Sigmoid colon (tissue), 7 donors: ENCODE measurements at regions of chr9 and their contacts with region 1.

Region 1: DNA sequence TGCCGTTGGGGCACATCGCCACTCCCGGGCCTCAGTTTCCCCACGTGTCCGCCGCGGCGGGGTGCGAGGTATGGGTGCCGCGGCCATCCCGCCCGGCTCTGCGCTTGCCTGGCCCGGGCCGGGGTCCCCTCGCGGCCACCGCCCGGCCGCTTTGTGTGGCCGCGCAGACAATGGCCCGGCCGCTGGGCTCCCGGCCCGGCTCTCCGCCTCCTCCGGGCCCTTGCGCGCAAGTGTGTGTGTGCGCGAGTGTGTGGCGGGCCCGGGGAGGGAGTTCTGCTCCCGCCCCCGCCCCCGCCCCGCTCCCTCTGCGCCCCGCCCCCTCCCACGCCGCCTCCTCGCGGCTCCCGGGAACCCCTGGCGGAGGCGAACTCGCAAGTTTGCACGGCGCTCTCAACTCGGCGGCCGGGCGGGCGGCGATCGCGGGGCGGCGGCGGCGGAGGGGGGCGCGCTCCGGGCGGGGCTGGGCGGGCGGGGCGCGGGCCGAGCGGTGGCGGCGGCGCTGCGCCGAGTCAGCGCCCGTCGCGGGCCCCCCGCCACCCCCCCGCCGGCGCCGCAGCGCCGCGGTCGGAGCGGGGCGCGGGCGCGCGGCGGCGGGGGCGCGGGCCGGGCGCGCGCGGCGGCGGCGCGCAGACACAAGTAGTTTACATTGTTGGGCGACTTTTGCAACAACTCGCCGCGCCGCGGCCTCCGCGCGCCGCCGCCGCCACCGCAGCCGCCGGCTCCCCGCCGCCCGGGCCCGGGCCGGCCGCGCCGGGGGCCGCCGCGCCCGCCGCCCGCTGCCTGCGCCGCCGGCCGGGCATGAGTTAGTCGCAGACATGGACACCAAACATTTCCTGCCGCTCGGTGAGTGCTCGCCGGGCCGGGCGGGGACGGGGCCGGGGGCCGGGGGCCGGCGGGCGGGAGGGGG is at the start of gene RXRA:
- DNase-seq: peak; percentile 94
- H3K4me3 ChIP-seq: peak within 1 kb of the TSS; percentile 81 to 88 (median 84)
- H3K27ac ChIP-seq: peak within 1 kb of the TSS; percentile 96 to 100 (median 97)
- H3K4me1 ChIP-seq: peaks cover 0 to 63% (median 60%) of the 10 kb centered on the region in 4 donors
- H3K27me3 ChIP-seq: no peaks in the 10 kb centered on the region
- CTCF ChIP-seq: no peak
- EP300 ChIP-seq: no peak
- POLR2A ChIP-seq: no peak
- total RNA-seq, gene RXRA: 26.7 to 49.0 (median 31.4) TPM

Region 2: DNA sequence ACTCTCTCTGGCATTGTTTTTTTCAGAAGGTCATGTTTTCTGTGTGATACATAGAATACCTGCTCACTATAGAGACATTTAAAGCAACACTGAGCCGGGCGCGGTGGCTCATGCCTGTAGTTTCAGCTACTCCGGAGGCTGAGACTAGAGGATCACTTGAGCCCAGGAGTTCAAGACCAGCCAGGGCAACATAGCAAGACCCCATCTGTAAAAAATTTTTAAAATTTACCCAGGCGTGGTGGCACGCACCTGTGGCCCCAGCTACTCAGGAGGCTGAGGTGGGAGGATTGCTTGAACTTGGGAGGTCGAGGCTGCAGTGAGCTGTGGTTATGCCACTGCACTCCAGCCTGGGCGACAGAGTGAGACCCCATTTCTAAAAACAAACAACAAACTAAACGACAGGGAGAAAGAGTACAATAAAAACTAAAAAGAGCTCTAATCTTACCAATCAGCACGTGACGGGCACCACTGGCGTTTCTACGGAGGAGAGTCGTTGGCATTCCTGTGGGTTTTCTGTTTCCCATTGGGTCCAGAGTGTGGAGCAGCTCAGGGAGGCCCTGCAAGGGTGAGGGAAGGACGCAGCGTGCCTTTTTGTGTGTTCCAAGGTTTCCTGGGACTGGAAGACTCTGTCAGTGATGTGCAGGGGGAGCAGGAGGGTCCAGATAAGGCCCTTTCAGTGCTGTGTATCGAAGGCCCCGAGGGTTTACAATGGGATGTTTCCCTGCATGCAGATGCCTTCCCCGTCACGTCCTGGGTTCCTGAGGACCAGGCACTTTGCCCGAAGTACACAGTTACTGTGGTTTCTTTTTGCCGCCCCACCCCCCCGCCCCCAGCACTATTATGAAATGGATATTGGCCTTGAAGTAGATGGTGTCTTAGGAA is 154.5 kb before region 1 on chr9:
- intact Hi-C with region 1: loop called (anchors 1 kb)
- DNase-seq: peak; percentile 84
- H3K4me3 ChIP-seq: no peak overlapping the region
- H3K27ac ChIP-seq: peak overlapping the region in 3 of 4 donors; percentile 58 to 67 (median 63)
- H3K4me1 ChIP-seq: peaks cover 0 to 41% (median 30%) of the 10 kb centered on the region in 4 donors
- H3K27me3 ChIP-seq: peaks cover 13 to 32% (median 14%) of the 10 kb centered on the region in 3 donors
- CTCF ChIP-seq: no peak
- EP300 ChIP-seq: no peak
- POLR2A ChIP-seq: no peak

Region 3: DNA sequence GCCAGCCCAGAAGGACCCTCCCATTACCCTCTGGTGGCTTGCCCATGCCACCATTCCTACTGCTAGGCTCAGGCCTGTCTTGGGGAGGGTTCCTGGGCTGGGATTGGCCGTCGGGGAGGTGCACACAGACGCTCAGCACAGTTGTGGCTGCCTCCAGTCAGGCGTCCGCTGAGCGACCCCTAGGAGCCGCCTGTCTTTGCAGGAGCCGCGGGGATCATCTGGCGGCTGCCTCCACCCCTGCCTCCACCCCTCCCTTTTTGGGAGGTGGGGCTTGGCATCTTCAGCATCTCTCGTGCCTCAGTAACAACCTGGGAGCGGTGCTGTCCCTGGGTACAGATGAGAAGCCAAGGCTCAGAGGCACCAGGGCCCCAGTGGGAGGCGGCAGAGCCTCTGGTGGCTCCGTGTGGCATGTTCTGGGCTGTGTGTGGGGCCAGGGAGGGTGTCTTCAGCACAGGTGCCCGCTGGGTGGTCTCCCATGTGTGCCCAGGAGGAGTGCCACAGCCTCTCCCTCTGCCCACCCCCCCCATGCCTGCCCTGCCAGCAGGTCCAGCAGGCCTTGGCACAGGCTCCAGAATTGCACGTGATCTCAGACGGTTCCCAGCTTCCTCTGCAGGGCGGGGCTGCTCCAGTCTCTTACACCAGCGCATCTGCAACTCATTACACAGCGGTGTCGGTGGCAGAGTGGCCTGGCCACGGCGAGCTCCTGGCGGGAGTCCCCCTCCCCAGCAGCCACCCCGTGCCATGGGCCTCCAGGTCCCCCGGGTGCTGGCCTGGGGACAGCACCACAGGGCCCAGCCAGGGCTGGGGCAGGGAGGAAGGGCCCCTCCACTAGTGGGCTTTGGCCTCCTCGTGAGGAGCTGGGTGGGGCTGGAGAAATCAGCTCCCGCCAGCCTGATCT is 40.0 kb after region 1 on chr9:
- intact Hi-C with region 1: loop called (anchors 2 kb)
- DNase-seq: peak; percentile 98
- H3K4me3 ChIP-seq: peak overlapping the region in 3 of 4 donors; percentile 8 to 30 (median 27)
- H3K27ac ChIP-seq: peak overlapping the region; percentile 83 to 87 (median 84)
- H3K4me1 ChIP-seq: peaks cover 0 to 67% (median 62%) of the 10 kb centered on the region in 4 donors
- H3K27me3 ChIP-seq: no peaks in the 10 kb centered on the region
- CTCF ChIP-seq: peak in 1 of 4 experiments; percentile 13
- EP300 ChIP-seq: peak in 1 of 4 donors; percentile 33
- POLR2A ChIP-seq: peak; percentile 45 to 74

Region 4: DNA sequence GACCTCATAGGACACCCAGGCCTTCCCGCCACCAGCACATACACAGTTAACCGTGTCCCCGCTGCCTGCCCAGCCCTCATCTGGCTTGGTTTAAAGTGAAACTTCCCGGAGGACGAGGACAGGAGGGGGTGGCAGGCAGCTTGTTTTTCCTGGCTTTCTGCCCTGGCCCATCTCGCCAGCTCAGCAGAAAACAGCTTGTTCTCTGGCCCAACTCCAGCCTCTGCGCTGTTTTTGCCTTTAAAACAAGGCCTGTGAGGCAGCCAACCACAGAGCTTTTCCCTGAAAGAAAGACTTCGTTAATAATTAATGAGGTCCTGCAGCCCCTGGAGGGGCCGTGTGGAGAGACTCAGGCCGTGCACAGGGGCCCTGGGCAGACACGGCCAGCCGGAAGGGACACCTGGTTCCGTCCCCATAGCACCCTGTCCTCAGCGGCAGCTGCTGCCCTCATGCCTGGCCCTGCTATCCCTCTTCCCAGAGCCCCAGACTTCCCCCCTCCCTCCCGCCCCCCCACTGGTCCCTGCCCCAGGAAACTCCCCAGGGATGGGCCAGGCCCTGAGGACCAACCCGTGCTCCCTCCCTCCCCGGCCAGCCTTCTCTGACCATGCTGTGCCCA is 108.9 kb after region 1 on chr9:
- intact Hi-C with region 1: loop called (anchors 2 kb)
- DNase-seq: peak; percentile 99
- H3K4me3 ChIP-seq: peak overlapping the region in 3 of 4 donors; percentile 14 to 24 (median 24)
- H3K27ac ChIP-seq: peak overlapping the region; percentile 87 to 93 (median 90)
- H3K4me1 ChIP-seq: peaks cover 0 to 77% (median 72%) of the 10 kb centered on the region in 4 donors
- H3K27me3 ChIP-seq: no peaks in the 10 kb centered on the region
- CTCF ChIP-seq: no peak
- EP300 ChIP-seq: peak in 2 of 4 donors; percentile 79 to 82
- POLR2A ChIP-seq: no peak

Region 5: GRCh38 chr9:134570151-134570621 is 244.1 kb after region 1 on chr9:
- intact Hi-C with region 1: no loop called
- DNase-seq: peak; percentile 39
- H3K4me3 ChIP-seq: no peak overlapping the region
- H3K27ac ChIP-seq: no peak overlapping the region
- H3K4me1 ChIP-seq: no peaks in the 10 kb centered on the region
- H3K27me3 ChIP-seq: no peaks in the 10 kb centered on the region
- CTCF ChIP-seq: no peak
- EP300 ChIP-seq: no peak
- POLR2A ChIP-seq: no peak

Region 6: GRCh38 chr9:134660407-134660806 is 334.3 kb after region 1 on chr9:
- intact Hi-C with region 1: loop called (anchors 5 kb)
- DNase-seq: peak; percentile 53
- H3K4me3 ChIP-seq: no peak overlapping the region
- H3K27ac ChIP-seq: peak overlapping the region; percentile 79 to 92 (median 90)
- H3K4me1 ChIP-seq: peaks cover 0 to 93% (median 88%) of the 10 kb centered on the region in 4 donors
- H3K27me3 ChIP-seq: no peaks in the 10 kb centered on the region
- CTCF ChIP-seq: peak in 3 of 4 experiments; percentile 26 to 61 (median 42)
- EP300 ChIP-seq: no peak
- POLR2A ChIP-seq: no peak